Mammary epithelial cell (primary cell): ENCODE measurements at regions of chr2 and their contacts with region 1.

Region 1: GRCh38 chr2:127810619-127811396 is at the start of gene WDR33:
- DNase-seq: peak; percentile 91
- H3K4me3 ChIP-seq: peak within 1 kb of the TSS; percentile 77 to 91 (median 86)
- H3K27ac ChIP-seq: peak within 1 kb of the TSS; percentile 89
- H3K4me1 ChIP-seq: peaks cover 14% of the 10 kb centered on the region
- H3K27me3 ChIP-seq: no peaks in the 10 kb centered on the region
- CTCF ChIP-seq: peak in 1 of 2 donors; percentile 47
- total RNA-seq, gene WDR33: 31.5 to 43.7 TPM

Region 2: GRCh38 chr2:127508631-127509034 is 302.2 kb before region 1 on chr2:
- CTCF ChIA-PET with region 1: no interaction called
- dilution Hi-C with region 1: no loop called
- in situ Hi-C with region 1: no loop called
- intact Hi-C with region 1: loop called (anchors 5 kb)
- DNase-seq: peak; percentile 99
- H3K4me3 ChIP-seq: no peak overlapping the region
- H3K27ac ChIP-seq: peak overlapping the region; percentile 68
- H3K4me1 ChIP-seq: peaks cover 16% of the 10 kb centered on the region
- H3K27me3 ChIP-seq: no peaks in the 10 kb centered on the region
- CTCF ChIP-seq: no peak

Region 3: GRCh38 chr2:127591221-127591923 is 219.4 kb before region 1 on chr2:
- CTCF ChIA-PET with region 1: no interaction called
- dilution Hi-C with region 1: no loop called
- in situ Hi-C with region 1: no loop called
- intact Hi-C with region 1: loop called (anchors 1 kb)
- DNase-seq: peak; percentile 24
- H3K4me3 ChIP-seq: no peak overlapping the region
- H3K27ac ChIP-seq: no peak overlapping the region
- H3K4me1 ChIP-seq: no peaks in the 10 kb centered on the region
- H3K27me3 ChIP-seq: no peaks in the 10 kb centered on the region
- CTCF ChIP-seq: peak; percentile 86 to 92

Region 4: DNA sequence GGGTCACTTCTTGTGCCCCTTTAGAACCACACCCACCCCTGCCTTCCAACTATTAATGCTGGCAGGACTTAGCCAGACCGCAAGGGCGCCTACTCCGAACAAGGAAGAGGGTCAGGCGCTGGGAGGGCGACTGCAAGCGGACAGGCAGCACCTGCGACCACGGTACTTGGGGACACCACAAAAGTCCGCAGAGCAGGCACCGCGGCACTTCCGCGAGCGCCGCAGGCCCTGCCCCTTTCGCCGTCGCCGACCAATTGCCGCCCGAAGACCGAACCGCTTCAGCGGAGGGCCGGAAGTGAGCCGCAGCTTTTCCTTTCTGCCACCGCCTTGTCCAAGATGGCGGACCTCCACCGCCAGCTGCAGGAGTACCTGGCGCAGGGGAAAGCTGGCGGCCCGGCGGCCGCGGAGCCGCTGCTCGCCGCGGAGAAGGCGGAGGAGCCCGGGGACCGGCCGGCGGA is 109.6 kb before region 1 on chr2 and contains the start of gene SFT2D3:
- CTCF ChIA-PET with region 1: no interaction called
- dilution Hi-C with region 1: no loop called
- in situ Hi-C with region 1: no loop called
- intact Hi-C with region 1: loop called (anchors 5 kb)
- DNase-seq: peak; percentile 81
- H3K4me3 ChIP-seq: peak within 1 kb of the TSS; percentile 72 to 87 (median 80)
- H3K27ac ChIP-seq: peak within 1 kb of the TSS; percentile 72
- H3K4me1 ChIP-seq: peaks cover 20% of the 10 kb centered on the region
- H3K27me3 ChIP-seq: no peaks in the 10 kb centered on the region
- CTCF ChIP-seq: no peak
- total RNA-seq, gene SFT2D3: 3.2 to 9.2 TPM

Region 5: DNA sequence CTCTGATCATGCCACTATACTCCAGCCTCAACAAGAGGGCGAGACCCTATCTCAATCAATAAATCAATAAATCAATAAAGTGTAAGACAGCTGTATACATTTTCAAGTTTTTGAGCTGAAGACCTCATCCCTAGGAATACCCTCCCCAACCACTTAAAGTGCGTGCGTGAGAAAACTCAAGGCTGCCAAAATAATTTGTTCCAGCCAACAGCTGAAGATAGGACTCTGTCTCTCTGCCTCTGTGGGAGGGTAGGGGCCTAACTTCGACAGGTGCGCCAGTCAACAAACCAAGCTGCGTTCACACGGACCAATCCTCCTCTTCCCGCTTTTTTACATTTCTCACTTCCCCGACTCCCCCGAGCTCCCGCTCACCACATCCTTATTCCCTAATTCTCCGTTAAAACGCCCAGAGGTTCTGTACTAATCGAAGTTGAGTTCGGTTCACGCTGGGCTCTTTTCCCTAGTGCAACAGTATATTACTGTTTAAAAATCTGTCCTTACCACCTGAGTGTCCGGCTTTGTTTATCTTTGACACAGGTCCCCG is 46.5 kb after region 1 on chr2:
- CTCF ChIA-PET with region 1: no interaction called
- dilution Hi-C with region 1: no loop called
- in situ Hi-C with region 1: no loop called
- intact Hi-C with region 1: loop called (anchors 2 kb)
- DNase-seq: peak; percentile 20
- H3K4me3 ChIP-seq: peak overlapping the region; percentile 79 to 98 (median 97)
- H3K27ac ChIP-seq: peak overlapping the region; percentile 54
- H3K4me1 ChIP-seq: peaks cover 13% of the 10 kb centered on the region
- H3K27me3 ChIP-seq: no peaks in the 10 kb centered on the region
- CTCF ChIP-seq: no peak